Endothelial cell of umbilical vein (primary cell): ENCODE measurements at regions of chr10 and their contacts with region 1.

Region 1: DNA sequence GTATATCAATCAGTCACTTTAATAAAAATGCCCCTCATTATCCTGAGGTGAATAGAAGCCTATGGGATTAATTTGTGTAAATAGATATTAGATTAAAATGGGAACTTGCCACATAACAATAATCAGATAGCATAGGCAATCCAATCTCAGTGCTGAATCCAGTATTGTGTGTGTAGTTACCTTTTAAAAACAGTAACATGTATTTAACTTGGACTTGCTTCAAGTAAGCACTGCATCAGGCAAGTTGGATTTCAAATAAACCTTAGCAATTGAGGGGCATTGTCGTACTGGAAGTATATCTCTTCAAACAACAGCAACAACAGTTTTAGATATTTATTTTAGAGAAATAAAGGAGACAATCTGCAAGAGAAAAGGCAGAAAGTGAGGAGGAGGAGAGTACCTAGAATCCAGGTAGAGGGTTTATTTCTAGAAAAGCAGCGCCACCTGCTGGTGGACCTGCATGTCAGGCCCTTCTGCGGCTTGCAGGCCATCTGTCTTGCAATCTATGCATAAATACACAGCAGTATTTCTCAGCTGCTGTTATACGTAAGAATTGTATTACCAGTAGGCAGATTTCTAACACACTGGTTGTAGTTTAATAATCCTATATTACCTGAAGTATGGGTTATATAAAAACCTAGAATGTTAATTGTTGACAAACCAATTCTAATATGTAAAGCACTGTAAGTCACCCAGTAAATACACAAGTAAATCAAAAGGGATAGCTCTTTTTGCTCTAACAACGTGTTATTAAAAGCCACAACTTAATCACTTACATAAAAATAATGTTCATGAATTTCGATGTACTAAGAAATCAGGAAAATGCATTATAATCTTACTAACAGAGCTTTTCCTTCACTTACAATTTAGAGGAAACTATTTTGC is 652.8 kb downstream of the KCNMA1 start:
- DNase-seq: peak; percentile 68
- H3K4me3 ChIP-seq: no peak overlapping the region
- H3K27ac ChIP-seq: no peak overlapping the region
- H3K4me1 ChIP-seq: no peaks in the 10 kb centered on the region
- H3K27me3 ChIP-seq: no peaks in the 10 kb centered on the region
- CTCF ChIP-seq: peak; percentile 88 to 89
- POLR2A ChIP-seq: no peak

Region 2: GRCh38 chr10:76736815-76737618 is 247.8 kb before region 1 on chr10:
- CTCF ChIA-PET with region 1: no interaction called
- POLR2A ChIA-PET with region 1: no interaction called
- dilution Hi-C with region 1: no loop called
- intact Hi-C with region 1: no loop called
- DNase-seq: no peak
- H3K4me3 ChIP-seq: no peak overlapping the region
- H3K27ac ChIP-seq: no peak overlapping the region
- H3K4me1 ChIP-seq: no peaks in the 10 kb centered on the region
- H3K27me3 ChIP-seq: no peaks in the 10 kb centered on the region
- CTCF ChIP-seq: no peak
- POLR2A ChIP-seq: no peak

Region 3: GRCh38 chr10:76885816-76886215 is 99.0 kb before region 1 on chr10:
- CTCF ChIA-PET with region 1: no interaction called
- POLR2A ChIA-PET with region 1: no interaction called
- dilution Hi-C with region 1: no loop called
- intact Hi-C with region 1: no loop called
- DNase-seq: no peak
- H3K4me3 ChIP-seq: no peak overlapping the region
- H3K27ac ChIP-seq: no peak overlapping the region
- H3K4me1 ChIP-seq: no peaks in the 10 kb centered on the region
- H3K27me3 ChIP-seq: no peaks in the 10 kb centered on the region
- CTCF ChIP-seq: no peak
- POLR2A ChIP-seq: no peak

Region 4: GRCh38 chr10:76970711-76971519 is 13.9 kb before region 1 on chr10:
- CTCF ChIA-PET with region 1: interaction called, 10 read pairs
- POLR2A ChIA-PET with region 1: no interaction called
- dilution Hi-C with region 1: no loop called
- intact Hi-C with region 1: no loop called
- DNase-seq: no peak
- H3K4me3 ChIP-seq: no peak overlapping the region
- H3K27ac ChIP-seq: no peak overlapping the region
- H3K4me1 ChIP-seq: no peaks in the 10 kb centered on the region
- H3K27me3 ChIP-seq: no peaks in the 10 kb centered on the region
- CTCF ChIP-seq: no peak
- POLR2A ChIP-seq: no peak

Region 5: GRCh38 chr10:77004917-77005564 is 20.2 kb after region 1 on chr10:
- CTCF ChIA-PET with region 1: interaction called, 15 read pairs
- POLR2A ChIA-PET with region 1: no interaction called
- dilution Hi-C with region 1: no loop called
- intact Hi-C with region 1: no loop called
- DNase-seq: peak; percentile 49
- H3K4me3 ChIP-seq: no peak overlapping the region
- H3K27ac ChIP-seq: no peak overlapping the region
- H3K4me1 ChIP-seq: no peaks in the 10 kb centered on the region
- H3K27me3 ChIP-seq: peaks cover 4 to 5% of the 10 kb centered on the region in 2 experiments
- CTCF ChIP-seq: peak; percentile 53 to 66
- POLR2A ChIP-seq: no peak